PC-9 (cell line): ENCODE measurements at regions of chr12 and their contacts with region 1.

Region 1: GRCh38 chr12:120554678-120555077 is 20.5 kb downstream of the RNF10 start:
- DNase-seq: no peak
- H3K4me3 ChIP-seq: no peak overlapping the region
- H3K27ac ChIP-seq: no peak overlapping the region
- H3K4me1 ChIP-seq: no peaks in the 10 kb centered on the region
- H3K27me3 ChIP-seq: no peaks in the 10 kb centered on the region
- CTCF ChIP-seq: no peak

Region 2: DNA sequence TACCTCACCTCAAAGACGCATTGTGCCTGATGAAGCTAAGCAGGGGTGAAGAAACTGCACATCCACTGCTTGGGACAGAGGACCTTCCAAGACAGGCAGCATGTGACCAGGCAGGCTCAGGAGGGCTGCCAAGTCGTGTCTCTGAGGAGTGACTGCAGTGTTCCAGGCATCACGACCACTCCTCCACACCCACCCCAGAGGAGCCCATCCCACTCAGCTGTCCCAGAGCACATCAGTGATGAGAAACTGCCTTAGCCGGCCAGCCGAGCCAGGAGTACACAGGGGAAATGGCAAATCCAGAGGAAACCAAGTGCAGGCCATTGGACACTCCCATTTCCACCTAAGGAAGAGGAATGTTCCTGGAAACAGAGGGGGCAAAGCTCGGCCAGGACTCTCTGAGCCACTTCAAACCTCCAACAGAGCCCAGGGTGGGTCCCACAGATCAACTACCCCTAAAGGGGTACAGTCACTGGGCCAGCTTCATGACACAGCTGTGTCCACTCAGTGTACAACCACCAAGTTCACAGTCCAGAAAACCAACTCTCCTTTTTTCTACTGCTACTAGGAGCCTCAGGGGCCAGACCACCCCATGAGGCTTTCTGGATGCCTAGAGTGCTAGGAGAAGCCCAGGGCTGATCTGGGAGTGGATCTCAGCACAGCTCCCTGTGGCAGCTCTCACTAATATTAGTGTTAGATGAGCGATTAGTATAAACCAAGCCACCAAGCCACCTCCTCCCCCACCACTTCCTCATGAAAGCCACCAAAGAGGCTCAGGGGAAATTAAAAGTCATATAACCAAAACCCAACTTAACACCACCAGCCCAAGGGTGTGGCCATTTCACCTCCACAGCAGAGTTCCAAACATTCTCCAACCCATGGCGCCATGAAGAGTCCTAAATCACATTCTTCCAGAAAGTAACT is 304.5 kb before region 1 on chr12:
- CTCF ChIA-PET with region 1: no interaction called
- POLR2A ChIA-PET with region 1: no interaction called
- intact Hi-C with region 1: no loop called
- DNase-seq: no peak
- H3K4me3 ChIP-seq: no peak overlapping the region
- H3K27ac ChIP-seq: no peak overlapping the region
- H3K4me1 ChIP-seq: peaks cover 12% of the 10 kb centered on the region
- H3K27me3 ChIP-seq: no peaks in the 10 kb centered on the region
- CTCF ChIP-seq: no peak

Region 3: GRCh38 chr12:120370343-120371243 is 184.1 kb before region 1 on chr12:
- CTCF ChIA-PET with region 1: interaction called, 16 read pairs
- POLR2A ChIA-PET with region 1: no interaction called
- intact Hi-C with region 1: no loop called
- DNase-seq: no peak
- H3K4me3 ChIP-seq: no peak overlapping the region
- H3K27ac ChIP-seq: no peak overlapping the region
- H3K4me1 ChIP-seq: no peaks in the 10 kb centered on the region
- H3K27me3 ChIP-seq: peaks cover 48% of the 10 kb centered on the region
- CTCF ChIP-seq: no peak

Region 4: DNA sequence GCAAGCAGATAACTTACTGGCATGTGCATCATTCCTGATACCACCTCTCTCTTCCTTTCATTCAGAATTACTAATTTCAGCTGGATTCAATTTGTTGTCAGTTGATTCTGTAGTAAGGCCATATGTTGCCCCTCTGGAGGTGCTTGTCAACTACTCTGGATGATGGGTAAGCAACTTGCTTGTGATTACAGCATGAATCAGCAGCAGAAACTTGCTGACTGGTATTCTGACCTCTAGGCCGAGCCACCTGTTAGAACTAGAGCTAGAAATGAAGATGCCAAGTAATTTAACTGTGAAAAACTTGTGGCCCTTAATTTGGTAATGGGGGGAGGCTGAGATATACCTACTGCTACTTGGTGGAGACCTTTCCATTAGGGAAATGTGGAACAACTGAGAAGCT is 15.4 kb before region 1 on chr12:
- CTCF ChIA-PET with region 1: interaction called, 3 read pairs
- POLR2A ChIA-PET with region 1: interaction called, 15 read pairs
- intact Hi-C with region 1: no loop called
- DNase-seq: no peak
- H3K4me3 ChIP-seq: no peak overlapping the region
- H3K27ac ChIP-seq: peak overlapping the region; percentile 47
- H3K4me1 ChIP-seq: peaks cover 44% of the 10 kb centered on the region
- H3K27me3 ChIP-seq: no peaks in the 10 kb centered on the region
- CTCF ChIP-seq: no peak

Region 5: GRCh38 chr12:120640840-120641833 is 86.5 kb after region 1 on chr12:
- CTCF ChIA-PET with region 1: interaction called, 11 read pairs
- POLR2A ChIA-PET with region 1: no interaction called
- intact Hi-C with region 1: no loop called
- DNase-seq: peak; percentile 44 to 57
- H3K4me3 ChIP-seq: peak overlapping the region; percentile 54; the same call in 1 of the 2 replicates
- H3K27ac ChIP-seq: no peak overlapping the region
- H3K4me1 ChIP-seq: peaks cover 5% of the 10 kb centered on the region
- H3K27me3 ChIP-seq: peaks cover 27% of the 10 kb centered on the region
- CTCF ChIP-seq: no peak

Region 6: DNA sequence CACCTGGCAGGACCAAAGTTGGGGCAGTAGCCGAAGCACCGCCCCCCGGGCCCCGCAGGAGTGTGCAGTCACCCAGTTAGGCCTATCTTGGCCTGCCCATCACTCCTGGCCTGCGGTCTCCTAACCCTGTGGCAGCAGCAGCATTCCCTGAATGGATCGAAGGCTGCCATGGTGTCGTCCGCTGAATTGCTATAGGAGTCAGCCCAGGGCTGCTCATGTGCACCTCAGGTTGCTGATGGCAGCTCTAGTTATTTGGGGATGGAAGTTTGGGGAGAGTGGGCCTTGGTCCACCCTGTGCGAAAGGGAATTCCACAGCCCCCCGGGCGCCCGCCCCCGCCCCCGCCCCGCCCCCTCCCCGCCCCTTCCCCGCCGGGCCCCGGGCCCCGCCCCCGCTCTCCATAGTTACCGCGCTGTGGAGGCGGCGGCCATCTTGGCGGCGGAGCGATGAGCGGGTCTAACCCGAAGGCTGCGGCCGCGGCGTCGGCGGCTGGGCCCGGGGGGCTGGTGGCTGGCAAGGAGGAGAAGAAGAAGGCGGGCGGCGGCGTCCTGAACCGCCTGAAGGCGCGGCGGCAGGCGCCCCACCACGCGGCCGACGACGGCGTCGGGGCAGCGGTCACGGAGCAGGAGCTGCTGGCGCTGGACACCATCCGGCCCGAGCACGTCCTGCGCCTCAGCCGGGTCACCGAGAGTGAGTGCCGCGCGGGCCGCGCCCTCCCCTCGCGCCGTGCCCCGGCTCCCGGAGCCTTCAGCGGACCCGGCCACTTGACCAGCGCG is 155.5 kb after region 1 on chr12 and contains the start of gene UNC119B:
- CTCF ChIA-PET with region 1: no interaction called
- POLR2A ChIA-PET with region 1: interaction called, 20 read pairs
- intact Hi-C with region 1: no loop called
- DNase-seq: peak in 1 of 2 experiments; percentile 63
- H3K4me3 ChIP-seq: peak within 1 kb of the TSS; percentile 87
- H3K27ac ChIP-seq: no peak within 1 kb of the TSS; the same call in 1 of the 2 replicates
- H3K4me1 ChIP-seq: peaks cover 7% of the 10 kb centered on the region; the same call in 1 of the 2 replicates
- H3K27me3 ChIP-seq: no peaks in the 10 kb centered on the region
- CTCF ChIP-seq: no peak
- total RNA-seq, gene UNC119B: 25.9 and 30.2 TPM in 2 replicates

Region 7: DNA sequence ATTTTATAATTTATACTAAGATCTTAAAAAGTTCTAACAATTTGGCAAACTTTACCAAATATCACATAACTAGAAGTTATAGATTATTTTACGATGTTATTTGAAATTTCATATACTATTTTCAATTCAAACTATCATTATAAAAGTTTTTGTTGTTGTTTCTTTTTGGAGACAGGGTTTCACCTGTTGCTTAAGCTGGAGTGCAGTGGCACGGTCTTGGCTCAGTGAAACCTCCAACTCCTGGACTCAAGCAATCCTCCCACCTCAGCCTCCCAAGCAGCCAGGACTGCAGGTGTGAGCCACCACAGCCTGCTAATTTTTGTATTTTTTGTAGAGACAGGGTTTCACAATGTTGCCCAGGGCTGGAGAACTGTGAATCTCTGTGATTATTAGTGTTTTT is 261.7 kb after region 1 on chr12:
- CTCF ChIA-PET with region 1: no interaction called
- POLR2A ChIA-PET with region 1: interaction called, 12 read pairs
- intact Hi-C with region 1: no loop called
- DNase-seq: no peak
- H3K4me3 ChIP-seq: no peak overlapping the region
- H3K27ac ChIP-seq: no peak overlapping the region
- H3K4me1 ChIP-seq: no peaks in the 10 kb centered on the region
- H3K27me3 ChIP-seq: no peaks in the 10 kb centered on the region
- CTCF ChIP-seq: no peak